ENCODE measurements at regions of chr19 and their contacts with region 1.

Region 1: GRCh38 chr19:3852614-3853254 is 16.1 kb downstream of the ZFR2 start:
- DNase-seq: peak; percentile 31
- ATAC-seq: no peak
- H3K4me3 ChIP-seq: no peak overlapping the region
- H3K27ac ChIP-seq: no peak overlapping the region
- H3K4me1 ChIP-seq: peaks cover 16% of the 10 kb centered on the region
- H3K27me3 ChIP-seq: peaks cover 1% of the 10 kb centered on the region in 2 experiments; a peak in 1 of 5 replicates
- CTCF ChIP-seq: peak; percentile 66
- EP300 ChIP-seq: no peak
- POLR2A ChIP-seq: no peak
- RAD21 ChIP-seq: peak; percentile 41; the same call in 1 of the 2 replicates

Region 2: DNA sequence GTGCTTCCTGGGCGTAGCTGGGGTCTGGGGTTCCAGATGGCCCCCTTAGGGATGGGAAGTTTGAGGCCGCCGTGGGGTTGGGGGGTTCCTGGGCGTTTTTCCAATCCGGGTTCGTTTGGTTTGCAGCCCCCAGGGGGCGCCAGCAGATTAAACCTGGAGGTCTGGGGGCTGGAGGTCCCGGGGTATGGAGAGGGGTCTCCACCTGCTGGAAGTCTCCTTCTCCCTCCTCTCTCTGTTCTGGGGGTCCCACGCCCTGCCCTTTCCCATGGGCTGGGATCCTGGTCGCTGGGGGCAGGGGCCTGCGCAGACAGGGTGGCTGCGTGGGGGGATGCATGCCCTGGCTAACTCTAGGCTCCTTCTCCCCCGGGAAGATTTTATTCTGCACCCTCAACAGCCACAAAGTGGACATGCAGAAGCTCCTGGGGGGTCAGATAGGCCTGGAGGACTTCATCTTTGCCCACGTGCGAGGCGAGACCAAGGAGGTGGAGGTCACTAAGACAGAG is 266.6 kb before region 1 on chr19:
- CTCF ChIA-PET with region 1: no interaction called
- POLR2A ChIA-PET with region 1: no interaction called
- in situ Hi-C with region 1: no loop called
- intact Hi-C with region 1: no loop called
- DNase-seq: no peak
- ATAC-seq: no peak; the same call in 2 of the 3 replicates
- H3K4me3 ChIP-seq: peak overlapping the region in 1 of 3 experiments; percentile 45; a peak in 1 of 6 replicates
- H3K27ac ChIP-seq: no peak overlapping the region
- H3K4me1 ChIP-seq: no peaks in the 10 kb centered on the region
- H3K27me3 ChIP-seq: peaks cover 2 to 23% of the 10 kb centered on the region in 2 experiments; a peak in 4 of 5 replicates
- CTCF ChIP-seq: peak; percentile 59
- EP300 ChIP-seq: no peak
- POLR2A ChIP-seq: no peak
- RAD21 ChIP-seq: peak; percentile 14; the same call in 1 of the 2 replicates

Region 3: DNA sequence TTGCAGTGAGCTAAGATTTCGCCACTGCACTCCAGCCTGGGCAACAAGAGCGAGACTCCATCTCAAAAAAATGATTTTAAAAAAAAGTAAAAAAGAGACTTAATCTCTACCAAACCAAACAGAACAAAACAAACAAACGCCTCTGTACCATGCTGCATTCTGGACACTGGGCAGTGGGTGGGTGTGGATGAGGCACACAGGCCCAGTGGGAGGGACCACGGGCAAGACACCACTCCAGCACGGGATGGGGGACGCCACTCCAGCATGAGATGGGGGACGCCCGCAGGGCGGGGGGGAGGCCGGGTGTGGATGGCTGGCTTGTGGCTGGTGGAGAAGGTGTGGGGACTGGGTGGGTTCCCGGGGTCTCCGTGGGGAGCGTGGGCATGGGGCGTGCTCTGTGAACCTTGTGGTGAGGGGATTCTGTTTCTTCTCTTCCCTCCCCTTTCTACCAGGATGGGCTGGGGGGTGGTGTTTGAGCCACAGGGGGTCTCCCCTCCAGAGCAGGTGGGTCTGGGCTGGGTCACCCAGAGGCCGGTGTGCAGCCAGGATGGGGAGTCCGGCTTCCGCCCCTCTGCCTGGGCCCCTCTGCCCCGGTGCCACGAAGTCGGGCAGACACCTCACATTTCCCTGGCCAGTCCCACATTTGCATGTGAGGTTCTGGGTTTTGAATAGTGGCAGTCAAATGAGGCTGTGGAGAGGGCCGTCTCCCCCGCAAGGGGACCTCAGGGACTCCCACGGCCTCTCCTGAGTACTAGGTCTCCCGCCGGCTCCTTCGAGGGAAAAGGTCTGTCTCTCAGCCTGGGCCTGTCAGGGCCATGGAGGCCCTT is 42.6 kb before region 1 on chr19:
- CTCF ChIA-PET with region 1: no interaction called
- POLR2A ChIA-PET with region 1: no interaction called
- in situ Hi-C with region 1: no loop called
- intact Hi-C with region 1: no loop called
- DNase-seq: no peak
- ATAC-seq: no peak
- H3K4me3 ChIP-seq: no peak overlapping the region
- H3K27ac ChIP-seq: no peak overlapping the region
- H3K4me1 ChIP-seq: no peaks in the 10 kb centered on the region
- H3K27me3 ChIP-seq: peaks cover 6 to 40% of the 10 kb centered on the region in 2 experiments
- CTCF ChIP-seq: no peak
- EP300 ChIP-seq: no peak
- POLR2A ChIP-seq: no peak
- RAD21 ChIP-seq: no peak

Region 4: DNA sequence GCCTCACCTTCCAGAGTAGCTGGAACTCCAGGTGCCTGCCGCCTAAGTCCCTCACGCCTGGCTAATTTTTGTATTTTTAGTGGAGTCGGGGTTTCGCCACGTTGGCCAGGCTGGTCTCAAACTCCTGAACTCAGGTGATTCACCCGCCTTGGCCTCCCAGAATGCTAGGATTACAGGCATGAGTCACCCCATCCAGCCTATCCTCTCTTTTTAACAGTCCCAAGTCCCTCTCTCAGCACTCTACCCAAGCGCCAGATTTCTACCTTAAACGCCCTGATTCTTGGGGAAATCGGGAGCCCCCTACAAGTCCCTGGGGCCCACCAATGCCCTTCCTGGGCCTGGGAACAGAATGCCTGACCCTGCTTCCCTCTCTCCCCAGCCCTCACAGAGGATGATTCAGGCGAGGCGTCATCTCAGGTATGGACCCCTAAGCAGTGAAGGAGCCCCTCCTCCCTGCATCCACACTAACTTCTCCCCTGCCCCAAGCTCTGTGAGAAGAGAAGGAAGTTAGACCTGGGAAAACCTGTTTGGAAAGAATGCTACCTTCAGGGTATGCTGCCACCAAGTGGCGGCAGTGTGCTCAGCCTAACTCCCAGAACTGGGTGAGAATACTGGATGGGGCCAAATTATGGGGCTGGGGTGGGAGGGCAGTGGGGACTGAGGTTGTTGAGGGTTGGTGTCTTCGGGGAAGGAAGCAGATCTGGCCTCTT is 355.8 kb after region 1 on chr19:
- CTCF ChIA-PET with region 1: no interaction called
- POLR2A ChIA-PET with region 1: no interaction called
- in situ Hi-C with region 1: loop called (anchors 25 kb)
- intact Hi-C with region 1: no loop called
- DNase-seq: peak; percentile 52
- ATAC-seq: peak; percentile 56
- H3K4me3 ChIP-seq: no peak overlapping the region
- H3K27ac ChIP-seq: no peak overlapping the region
- H3K4me1 ChIP-seq: peaks cover 22% of the 10 kb centered on the region
- H3K27me3 ChIP-seq: peaks cover 0 to 9% of the 10 kb centered on the region in 2 experiments; a peak in 3 of 5 replicates
- CTCF ChIP-seq: peak; percentile 73
- EP300 ChIP-seq: no peak
- POLR2A ChIP-seq: no peak
- RAD21 ChIP-seq: no peak

Measured in HepG2 (cell line).